ENCODE measurements at regions of chr18 and their contacts with region 1.

Region 1: GRCh38 chr18:9147440-9148202 is 11.0 kb downstream of the ANKRD12 start:
- DNase-seq: peak; percentile 81
- ATAC-seq: peak; percentile 84
- H3K4me3 ChIP-seq: no peak overlapping the region
- H3K27ac ChIP-seq: no peak overlapping the region
- H3K4me1 ChIP-seq: peaks cover 7% of the 10 kb centered on the region
- H3K27me3 ChIP-seq: no peaks in the 10 kb centered on the region
- CTCF ChIP-seq: peak; percentile 80
- POLR2A ChIP-seq: no peak
- RAD21 ChIP-seq: peak; percentile 83

Region 2: DNA sequence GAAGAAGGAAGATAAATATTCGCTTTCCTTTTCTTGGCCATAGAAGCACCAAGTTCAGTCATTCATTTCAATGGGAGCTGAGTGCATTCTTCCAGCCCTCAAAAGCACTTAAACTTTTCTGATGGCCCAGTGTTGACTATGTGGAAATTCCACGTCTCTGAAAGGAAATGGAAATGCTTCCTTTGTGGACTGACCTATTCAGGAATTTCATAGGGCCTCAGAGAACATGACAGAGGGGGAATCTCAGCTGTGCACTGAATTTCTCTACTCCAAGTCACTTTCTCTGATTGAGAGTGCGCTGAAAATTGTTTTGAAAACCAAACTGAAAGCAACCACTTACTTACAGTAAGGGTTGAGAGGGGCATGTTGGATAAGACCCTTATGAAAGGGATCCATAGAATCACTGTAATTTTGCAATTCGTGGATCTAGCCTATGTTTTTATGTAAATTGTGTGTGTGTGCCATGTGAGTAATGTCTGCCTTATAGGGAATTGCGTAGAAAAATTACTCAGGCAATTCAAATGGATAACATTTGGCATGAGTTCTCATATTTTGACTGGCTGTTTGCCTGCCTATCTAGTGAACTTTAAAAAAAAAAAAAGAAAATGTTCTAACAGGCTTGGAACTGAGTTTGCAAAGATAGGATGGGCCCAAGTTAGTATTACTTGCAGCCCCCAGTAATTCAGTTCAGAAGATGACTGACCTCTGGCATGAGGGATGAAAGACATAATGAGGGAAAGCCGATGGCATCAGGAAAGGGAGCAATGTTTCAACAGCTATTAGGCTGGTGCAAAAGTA is 1143.5 kb before region 1 on chr18:
- CTCF ChIA-PET with region 1: no interaction called
- POLR2A ChIA-PET with region 1: no interaction called
- dilution Hi-C with region 1: no loop called
- in situ Hi-C with region 1: no loop called
- intact Hi-C with region 1: no loop called
- DNase-seq: peak; percentile 77
- ATAC-seq: peak; percentile 57
- H3K4me3 ChIP-seq: no peak overlapping the region
- H3K27ac ChIP-seq: no peak overlapping the region
- H3K4me1 ChIP-seq: peaks cover 8% of the 10 kb centered on the region
- H3K27me3 ChIP-seq: no peaks in the 10 kb centered on the region
- CTCF ChIP-seq: no peak
- POLR2A ChIP-seq: no peak
- RAD21 ChIP-seq: no peak

Region 3: GRCh38 chr18:8654503-8655451 is 492.8 kb before region 1 on chr18:
- CTCF ChIA-PET with region 1: no interaction called
- POLR2A ChIA-PET with region 1: no interaction called
- dilution Hi-C with region 1: no loop called
- in situ Hi-C with region 1: no loop called
- intact Hi-C with region 1: loop called (anchors 5 kb)
- DNase-seq: peak; percentile 34
- ATAC-seq: peak; percentile 82
- H3K4me3 ChIP-seq: no peak overlapping the region
- H3K27ac ChIP-seq: no peak overlapping the region
- H3K4me1 ChIP-seq: peaks cover 2% of the 10 kb centered on the region
- H3K27me3 ChIP-seq: no peaks in the 10 kb centered on the region; the same call in 1 of the 2 replicates
- CTCF ChIP-seq: peak; percentile 88
- POLR2A ChIP-seq: no peak
- RAD21 ChIP-seq: peak; percentile 77

Measured in IMR-90 (cell line).